ENCODE measurements at regions of chr6 and their contacts with region 1.

Region 1: GRCh38 chr6:28399350-28400121 is at the start of gene ZSCAN12:
- DNase-seq: peak; percentile 72 to 81 (median 80)
- H3K4me3 ChIP-seq: peak within 1 kb of the TSS; percentile 81 to 91
- H3K4me3 Mint-ChIP-seq: peak within 1 kb of the TSS; percentile 94 to 96 (median 95)
- H3K27ac ChIP-seq: peak within 1 kb of the TSS; percentile 44
- H3K27ac Mint-ChIP-seq: peak within 1 kb of the TSS; percentile 72 to 94 (median 90)
- H3K4me1 ChIP-seq: peaks cover 43% of the 10 kb centered on the region
- H3K4me1 Mint-ChIP-seq: peaks cover 19 to 59% (median 39%) of the 10 kb centered on the region in 4 donors
- H3K27me3 ChIP-seq: no peaks in the 10 kb centered on the region
- H3K27me3 Mint-ChIP-seq: peaks cover 8 to 11% of the 10 kb centered on the region in 2 donors
- total RNA-seq, gene ZSCAN12: 8.0 to 8.3 TPM

Region 2: DNA sequence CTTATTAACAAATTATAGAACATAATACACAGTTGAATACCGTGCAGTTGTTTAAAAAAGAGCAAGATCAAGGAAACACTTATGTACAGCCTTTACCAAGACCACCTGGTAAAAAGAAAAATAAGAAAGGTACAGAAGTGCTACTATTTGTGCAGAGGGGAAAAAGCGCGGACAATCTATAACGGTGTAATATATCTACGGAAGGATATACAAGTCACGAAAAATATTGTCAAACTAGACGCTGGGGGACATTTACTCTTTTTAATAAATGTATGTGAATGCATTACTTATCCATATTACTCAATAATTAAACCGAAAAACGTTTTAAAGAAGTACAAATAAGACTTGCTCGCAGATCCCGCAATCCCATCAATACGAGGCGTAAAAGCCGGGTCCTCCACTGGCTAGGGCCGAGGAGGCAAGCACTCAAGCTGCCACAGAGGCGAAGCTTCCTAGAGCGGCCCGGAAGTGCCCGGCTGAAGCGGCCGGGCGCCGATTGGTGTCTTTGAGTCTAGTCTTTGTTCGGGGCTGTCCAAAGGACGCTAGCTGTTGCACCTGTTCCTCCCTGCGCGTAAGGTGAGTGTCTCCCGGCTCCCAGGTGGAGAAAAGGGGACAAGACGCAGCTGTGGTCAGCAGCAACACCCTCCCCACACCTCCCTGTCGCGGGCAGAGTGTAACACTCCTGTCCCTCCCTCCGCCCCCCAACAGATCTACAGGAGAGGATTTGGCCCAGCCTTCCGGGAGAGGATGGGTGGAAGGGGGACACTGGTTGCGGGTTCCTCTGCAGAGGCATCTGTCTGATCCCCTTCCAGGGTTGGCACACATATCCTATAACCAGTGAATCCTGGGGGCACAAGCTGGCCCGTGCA is 275.2 kb before region 1 on chr6 and contains the start of gene ZSCAN16:
- CTCF ChIA-PET with region 1: no interaction called
- POLR2A ChIA-PET with region 1: no interaction called
- intact Hi-C with region 1: loop called (anchors 1 kb)
- DNase-seq: peak; percentile 63 to 79 (median 68)
- H3K4me3 ChIP-seq: peak within 1 kb of the TSS; percentile 70 to 74
- H3K4me3 Mint-ChIP-seq: peak within 1 kb of the TSS; percentile 93 to 98 (median 95)
- H3K27ac ChIP-seq: peak within 1 kb of the TSS; percentile 84
- H3K27ac Mint-ChIP-seq: peak within 1 kb of the TSS; percentile 96 to 99 (median 98)
- H3K4me1 ChIP-seq: peaks cover 24% of the 10 kb centered on the region
- H3K4me1 Mint-ChIP-seq: peaks cover 36 to 52% (median 48%) of the 10 kb centered on the region in 4 donors
- H3K27me3 ChIP-seq: no peaks in the 10 kb centered on the region
- H3K27me3 Mint-ChIP-seq: no peaks in the 10 kb centered on the region
- total RNA-seq, gene ZSCAN16: 13.4 to 14.8 TPM

Region 3: DNA sequence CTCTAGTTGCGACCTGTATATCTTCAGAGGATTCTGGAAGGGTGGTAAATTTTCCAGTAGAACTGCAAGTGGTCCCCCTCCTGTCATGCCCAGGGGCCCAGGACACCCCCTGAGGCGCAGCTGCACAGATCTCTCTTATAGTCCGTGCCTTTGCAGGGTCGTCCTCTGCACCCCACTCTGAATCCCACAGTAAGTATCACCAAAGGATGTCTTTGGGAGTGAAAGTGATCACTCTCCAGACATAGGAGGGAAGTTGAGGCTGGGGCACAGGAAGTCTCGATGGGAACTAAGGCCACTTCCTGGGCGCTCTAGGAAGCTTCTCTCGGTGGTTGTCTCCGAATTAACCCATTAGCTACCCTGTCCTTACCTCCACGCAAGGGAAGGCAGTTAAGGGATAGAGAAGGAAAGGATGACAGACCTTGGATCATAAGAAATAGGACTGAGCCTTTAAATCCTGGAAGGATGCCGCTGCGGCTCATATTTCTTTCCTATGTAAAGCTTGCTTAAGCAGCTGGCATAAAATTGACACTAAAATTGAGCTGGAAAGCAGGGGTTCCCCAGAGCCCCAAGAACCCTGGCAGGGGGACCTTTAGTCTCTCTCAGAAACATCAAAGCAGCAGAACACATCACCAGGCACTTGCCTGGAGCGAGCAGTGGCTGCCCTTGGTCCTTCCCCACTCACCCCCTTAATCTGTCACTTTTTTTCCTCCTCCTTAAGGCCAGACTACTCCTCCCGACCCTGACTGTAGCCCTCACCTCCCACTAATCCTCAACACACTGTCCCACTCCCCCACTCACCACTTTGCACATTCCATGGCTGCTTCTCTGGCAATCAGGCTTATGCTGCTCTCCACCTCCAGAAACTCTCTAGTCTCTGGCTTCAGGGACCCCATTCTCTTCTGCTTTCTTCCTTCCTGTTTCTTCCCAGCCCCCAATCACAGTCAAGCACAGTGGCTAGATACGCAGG is 147.2 kb before region 1 on chr6 and contains the start of gene ZKSCAN4:
- CTCF ChIA-PET with region 1: no interaction called
- POLR2A ChIA-PET with region 1: no interaction called
- intact Hi-C with region 1: loop called (anchors 2 kb)
- DNase-seq: peak; percentile 79 to 82 (median 80)
- H3K4me3 ChIP-seq: peak within 1 kb of the TSS; percentile 98 to 99
- H3K4me3 Mint-ChIP-seq: peak within 1 kb of the TSS; percentile 94 to 99 (median 97)
- H3K27ac ChIP-seq: peak within 1 kb of the TSS; percentile 52
- H3K27ac Mint-ChIP-seq: peak within 1 kb of the TSS; percentile 75 to 95 (median 89)
- H3K4me1 ChIP-seq: peaks cover 22% of the 10 kb centered on the region
- H3K4me1 Mint-ChIP-seq: peaks cover 22 to 38% (median 31%) of the 10 kb centered on the region in 4 donors
- H3K27me3 ChIP-seq: no peaks in the 10 kb centered on the region
- H3K27me3 Mint-ChIP-seq: no peaks in the 10 kb centered on the region
- total RNA-seq, gene ZKSCAN4: 9.9 to 11.1 TPM

Region 4: DNA sequence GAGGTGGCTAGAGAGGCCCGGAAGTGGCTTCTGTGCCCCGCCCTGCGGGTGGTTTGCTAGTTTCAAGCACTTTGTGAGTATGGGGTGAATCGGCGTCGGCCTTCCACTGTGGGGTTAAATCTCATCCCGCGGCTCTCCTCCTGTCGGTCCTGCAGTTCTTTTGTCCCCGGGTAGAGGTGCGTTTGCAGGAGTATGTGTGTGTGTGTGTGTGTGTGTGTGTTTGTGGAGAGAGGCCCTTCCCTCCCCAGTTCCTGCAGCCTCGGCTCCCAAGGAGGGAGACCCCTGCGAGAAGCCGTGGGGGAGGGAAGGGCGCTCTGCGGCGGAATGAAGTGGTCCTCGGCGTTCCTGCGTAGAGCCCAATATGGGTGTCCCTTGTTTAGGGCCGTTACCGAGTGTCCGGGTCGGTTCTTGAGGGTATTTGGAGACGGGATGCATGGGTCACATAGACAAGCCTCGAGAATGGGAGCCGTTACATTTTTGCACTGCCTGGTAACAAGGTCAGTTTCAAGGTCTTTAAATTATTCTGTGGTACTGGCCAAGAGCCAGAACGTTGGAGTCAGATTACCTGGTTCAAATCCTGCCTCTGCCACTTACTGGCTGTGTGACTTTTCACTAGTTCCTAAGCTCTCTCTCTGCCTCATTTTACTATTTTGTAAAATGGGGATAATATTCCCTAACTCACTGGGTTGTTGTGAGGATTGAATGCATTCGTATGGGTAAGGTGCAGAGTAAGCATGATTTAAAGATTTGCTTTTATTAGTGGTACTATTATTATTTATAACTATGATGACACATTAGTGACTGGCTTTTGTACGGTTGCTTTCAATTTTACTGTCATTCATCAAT is 49.4 kb before region 1 on chr6 and contains the start of gene ZKSCAN3:
- CTCF ChIA-PET with region 1: no interaction called
- POLR2A ChIA-PET with region 1: no interaction called
- intact Hi-C with region 1: loop called (anchors 1 kb)
- DNase-seq: peak; percentile 75 to 85 (median 79)
- H3K4me3 ChIP-seq: peak within 1 kb of the TSS; percentile 54 to 74
- H3K4me3 Mint-ChIP-seq: peak within 1 kb of the TSS; percentile 96 to 100 (median 99)
- H3K27ac ChIP-seq: peak within 1 kb of the TSS; percentile 57
- H3K27ac Mint-ChIP-seq: peak within 1 kb of the TSS; percentile 78 to 99 (median 97)
- H3K4me1 ChIP-seq: peaks cover 20% of the 10 kb centered on the region
- H3K4me1 Mint-ChIP-seq: peaks cover 23 to 34% (median 28%) of the 10 kb centered on the region in 4 donors
- H3K27me3 ChIP-seq: no peaks in the 10 kb centered on the region
- H3K27me3 Mint-ChIP-seq: peaks cover 8 to 14% of the 10 kb centered on the region in 2 donors
- total RNA-seq, gene ZKSCAN3: 12.4 to 12.6 TPM

Region 5: GRCh38 chr6:28542440-28543296 is 143.1 kb after region 1 on chr6:
- CTCF ChIA-PET with region 1: no interaction called
- POLR2A ChIA-PET with region 1: no interaction called
- intact Hi-C with region 1: loop called (anchors 1 kb)
- DNase-seq: peak; percentile 56 to 66 (median 62)
- H3K4me3 ChIP-seq: peak overlapping the region; percentile 33 to 57
- H3K4me3 Mint-ChIP-seq: peak overlapping the region; percentile 82 to 91 (median 88)
- H3K27ac ChIP-seq: no peak overlapping the region
- H3K27ac Mint-ChIP-seq: peak overlapping the region; percentile 38 to 95 (median 72)
- H3K4me1 ChIP-seq: peaks cover 20% of the 10 kb centered on the region
- H3K4me1 Mint-ChIP-seq: peaks cover 14 to 36% (median 23%) of the 10 kb centered on the region in 4 donors
- H3K27me3 ChIP-seq: no peaks in the 10 kb centered on the region
- H3K27me3 Mint-ChIP-seq: peaks cover 39 to 40% of the 10 kb centered on the region in 2 donors